H1 (cell line): ENCODE measurements at regions of chr1 and their contacts with region 1.

Region 1: DNA sequence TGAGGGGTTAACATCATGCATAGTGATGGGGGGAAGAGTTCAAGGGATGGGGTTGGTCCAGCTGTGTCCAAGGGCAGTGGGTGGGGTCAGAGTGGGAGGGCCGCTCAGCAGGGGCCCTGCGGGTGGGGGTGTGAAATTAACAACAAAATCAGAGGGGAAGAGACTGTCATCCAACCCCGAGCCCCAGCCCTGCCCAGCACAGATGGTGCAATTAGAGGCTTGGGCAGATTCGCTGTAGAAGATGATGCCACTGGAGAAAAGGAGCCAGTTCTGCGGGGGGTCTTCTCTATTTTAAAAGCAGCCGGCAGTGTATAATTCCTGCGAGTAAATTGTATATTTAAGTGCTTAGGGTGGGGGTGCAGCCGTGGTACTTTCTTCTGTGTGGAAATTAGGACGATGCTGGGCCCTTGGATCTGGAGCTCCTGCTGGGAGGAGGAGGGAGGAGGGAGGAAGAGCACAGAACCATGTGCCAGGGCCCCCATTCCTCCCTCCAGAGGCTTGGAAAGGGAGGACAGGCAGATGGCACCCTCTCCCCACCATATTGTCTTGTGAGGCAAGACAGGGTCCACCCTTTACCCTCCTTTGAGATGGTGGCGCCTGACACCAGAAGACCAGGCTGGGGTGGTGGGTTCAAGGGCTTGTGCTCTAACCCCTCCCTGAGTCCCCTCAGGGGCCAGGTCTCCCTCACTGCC is 89.1 kb downstream of the ACTL8 start:
- DNase-seq: no peak
- H3K4me3 ChIP-seq: no peak overlapping the region
- H3K27ac ChIP-seq: no peak overlapping the region
- H3K4me1 ChIP-seq: no peaks in the 10 kb centered on the region; a peak in 1 of 7 replicates
- H3K27me3 ChIP-seq: no peaks in the 10 kb centered on the region; a peak in 1 of 7 replicates
- CTCF ChIP-seq: no peak
- EP300 ChIP-seq: no peak
- POLR2A ChIP-seq: no peak
- RAD21 ChIP-seq: peak; percentile 10 to 16; a peak in 1 of 4 replicates

Region 2: DNA sequence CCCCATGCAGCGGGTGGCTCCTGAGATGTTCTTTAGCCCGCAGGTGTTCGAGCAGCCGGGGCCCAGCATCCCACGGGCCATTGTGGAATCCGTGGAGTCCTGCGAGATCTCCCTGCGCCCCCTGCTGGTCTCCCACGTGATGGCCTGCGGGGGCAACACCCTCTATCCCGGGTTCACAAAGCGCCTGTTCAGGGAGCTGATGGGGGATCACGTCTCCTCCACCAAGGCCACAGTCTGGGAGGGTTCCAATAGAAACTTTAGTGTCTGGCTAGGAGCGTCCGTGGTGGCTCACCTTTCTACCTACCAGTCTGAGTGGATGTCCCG is 18.2 kb before region 1 on chr1:
- CTCF ChIA-PET with region 1: interaction called, 14 read pairs
- POLR2A ChIA-PET with region 1: no interaction called
- DNase-seq: peak in 1 of 2 experiments; percentile 90
- H3K4me3 ChIP-seq: no peak overlapping the region
- H3K27ac ChIP-seq: no peak overlapping the region
- H3K4me1 ChIP-seq: no peaks in the 10 kb centered on the region
- H3K27me3 ChIP-seq: 0 out of 7 replicates have a peak, but pooled peaks cover 0 to 2% (median 0%) of the 10 kb centered on the region in 4 experiments
- CTCF ChIP-seq: peak; percentile 77 to 82 (median 78)
- EP300 ChIP-seq: no peak
- POLR2A ChIP-seq: no peak
- RAD21 ChIP-seq: peak; percentile 69 to 76

Region 3: DNA sequence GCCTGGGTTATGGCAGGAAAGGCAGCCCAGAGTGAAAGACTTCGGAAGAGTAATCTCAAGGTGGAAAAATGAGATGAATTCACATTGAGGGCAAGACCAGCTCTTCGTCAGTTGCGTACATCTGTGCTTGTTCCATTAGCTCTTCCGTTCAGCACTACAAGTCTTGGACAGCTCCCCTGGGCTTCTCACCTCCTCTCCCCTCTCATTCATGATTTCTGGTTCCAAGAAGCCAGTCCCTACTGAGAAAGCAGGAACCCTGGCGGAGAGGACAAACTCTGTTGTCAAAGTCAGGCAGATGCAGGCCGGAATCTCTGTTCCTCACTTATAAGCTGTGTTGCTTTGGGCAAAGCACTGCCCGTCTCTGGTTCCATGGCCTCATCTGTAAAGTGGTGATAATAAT is 12.7 kb before region 1 on chr1:
- CTCF ChIA-PET with region 1: interaction called, 14 read pairs
- POLR2A ChIA-PET with region 1: no interaction called
- DNase-seq: peak; percentile 21 to 76
- H3K4me3 ChIP-seq: no peak overlapping the region
- H3K27ac ChIP-seq: no peak overlapping the region
- H3K4me1 ChIP-seq: no peaks in the 10 kb centered on the region
- H3K27me3 ChIP-seq: 0 out of 7 replicates have a peak, but pooled peaks cover 0 to 2% (median 0%) of the 10 kb centered on the region in 4 experiments
- CTCF ChIP-seq: no peak
- EP300 ChIP-seq: no peak
- POLR2A ChIP-seq: no peak
- RAD21 ChIP-seq: peak in 1 of 2 experiments; percentile 26; a peak in 2 of 4 replicates